Natural killer cell (primary cell): ENCODE measurements at regions of chr10 and their contacts with region 1.

Region 1: DNA sequence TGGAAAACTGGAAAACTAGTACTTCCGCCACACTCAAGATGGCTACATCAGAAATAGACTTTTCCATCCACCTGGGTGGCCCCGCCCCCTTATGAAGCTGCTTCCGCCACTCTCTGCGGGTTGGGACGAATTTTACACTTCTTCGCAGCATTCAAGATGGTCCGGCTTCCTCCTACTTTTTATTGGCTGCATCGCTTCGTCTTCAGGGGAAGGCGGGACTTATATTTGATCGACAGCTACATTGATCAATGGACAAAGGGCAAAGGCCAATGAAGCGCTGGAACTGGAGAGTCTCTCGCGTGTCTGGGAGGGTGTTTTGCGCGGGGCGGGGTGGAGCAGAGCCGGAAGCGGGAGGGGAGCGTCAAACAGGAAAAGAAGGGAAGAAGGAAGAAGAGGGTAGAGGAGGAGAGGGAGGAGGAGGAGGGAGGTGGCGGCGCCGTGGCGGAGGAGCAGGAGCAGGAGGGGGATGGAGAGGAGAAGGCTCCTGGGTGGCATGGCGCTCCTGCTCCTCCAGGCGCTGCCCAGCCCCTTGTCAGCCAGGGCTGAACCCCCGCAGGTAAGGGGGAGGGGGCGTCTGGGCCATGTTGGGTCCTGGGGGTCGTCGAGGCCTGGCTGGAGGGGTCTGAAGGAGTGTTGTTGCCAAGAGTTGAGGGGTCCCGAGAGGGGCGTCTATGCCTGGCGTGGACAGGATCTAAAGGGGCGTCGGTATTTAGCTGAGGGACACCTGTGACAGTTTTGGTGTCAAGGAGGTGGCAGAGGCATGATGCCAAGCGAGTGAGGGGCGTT is at the start of gene WBP1L:
- DNase-seq: peak; percentile 92 to 99
- ATAC-seq: peak; percentile 96 to 99 (median 97)
- H3K4me3 ChIP-seq: peak within 1 kb of the TSS; percentile 85
- H3K4me3 Mint-ChIP-seq: peak within 1 kb of the TSS; percentile 93
- H3K27ac ChIP-seq: peak within 1 kb of the TSS; percentile 71
- H3K27ac Mint-ChIP-seq: peak within 1 kb of the TSS; percentile 78 to 86
- H3K4me1 ChIP-seq: peaks cover 16% of the 10 kb centered on the region
- H3K4me1 Mint-ChIP-seq: peaks cover 50 to 53% of the 10 kb centered on the region in 2 donors
- H3K27me3 ChIP-seq: no peaks in the 10 kb centered on the region
- H3K27me3 Mint-ChIP-seq: no peaks in the 10 kb centered on the region
- CTCF ChIP-seq: no peak
- total RNA-seq, gene WBP1L: 34.6 to 48.4 (median 47.9) TPM

Region 2: DNA sequence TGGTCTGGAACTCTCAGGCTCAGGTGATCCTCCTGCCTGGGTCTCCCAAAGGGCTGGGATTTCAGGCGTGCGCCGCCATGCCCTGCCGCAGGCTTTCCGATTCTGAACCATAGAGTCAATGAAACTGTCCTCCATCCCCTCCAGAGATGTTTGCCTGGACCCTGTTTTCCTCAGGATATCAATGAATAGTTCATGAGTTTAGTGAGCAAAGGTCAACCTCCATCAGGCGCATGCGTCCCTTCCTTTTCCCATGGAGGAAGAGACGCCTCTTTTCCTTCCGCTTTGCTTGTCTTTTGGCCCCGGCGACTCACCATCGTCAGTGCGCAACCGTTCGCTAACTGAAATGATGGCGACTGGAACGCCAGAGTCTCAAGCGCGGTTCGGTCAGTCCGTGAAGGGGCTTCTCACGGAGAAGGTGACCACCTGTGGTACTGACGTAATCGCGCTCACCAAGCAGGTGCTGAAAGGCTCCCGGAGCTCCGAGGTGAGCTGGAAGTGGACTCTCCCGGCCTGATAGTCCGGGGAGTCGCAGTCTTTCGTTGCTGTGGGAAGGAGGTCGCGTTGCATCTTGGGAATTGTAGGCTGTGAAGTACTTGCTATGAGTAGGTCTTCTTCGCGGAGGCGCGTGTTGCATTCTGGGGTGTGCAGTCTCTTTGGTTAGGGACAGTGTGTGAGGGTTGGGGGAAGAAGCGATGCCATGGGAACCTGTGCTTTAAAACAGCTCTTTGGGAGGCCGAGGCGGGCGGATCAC is 110.3 kb after region 1 on chr10 and contains the start of gene BORCS7:
- intact Hi-C with region 1: loop called (anchors 1 kb)
- DNase-seq: peak; percentile 77 to 94
- ATAC-seq: peak; percentile 98 to 100 (median 99)
- H3K4me3 ChIP-seq: peak within 1 kb of the TSS; percentile 100
- H3K4me3 Mint-ChIP-seq: peak within 1 kb of the TSS; percentile 99
- H3K27ac ChIP-seq: peak within 1 kb of the TSS; percentile 98
- H3K27ac Mint-ChIP-seq: peak within 1 kb of the TSS; percentile 94 to 98
- H3K4me1 ChIP-seq: peaks cover 5% of the 10 kb centered on the region
- H3K4me1 Mint-ChIP-seq: peaks cover 16 to 19% of the 10 kb centered on the region in 2 donors
- H3K27me3 ChIP-seq: no peaks in the 10 kb centered on the region
- H3K27me3 Mint-ChIP-seq: no peaks in the 10 kb centered on the region
- CTCF ChIP-seq: no peak
- total RNA-seq, gene BORCS7: 9.7 to 18.9 (median 15.4) TPM